ENCODE measurements at regions of chr19 and their contacts with region 1.

Region 1: DNA sequence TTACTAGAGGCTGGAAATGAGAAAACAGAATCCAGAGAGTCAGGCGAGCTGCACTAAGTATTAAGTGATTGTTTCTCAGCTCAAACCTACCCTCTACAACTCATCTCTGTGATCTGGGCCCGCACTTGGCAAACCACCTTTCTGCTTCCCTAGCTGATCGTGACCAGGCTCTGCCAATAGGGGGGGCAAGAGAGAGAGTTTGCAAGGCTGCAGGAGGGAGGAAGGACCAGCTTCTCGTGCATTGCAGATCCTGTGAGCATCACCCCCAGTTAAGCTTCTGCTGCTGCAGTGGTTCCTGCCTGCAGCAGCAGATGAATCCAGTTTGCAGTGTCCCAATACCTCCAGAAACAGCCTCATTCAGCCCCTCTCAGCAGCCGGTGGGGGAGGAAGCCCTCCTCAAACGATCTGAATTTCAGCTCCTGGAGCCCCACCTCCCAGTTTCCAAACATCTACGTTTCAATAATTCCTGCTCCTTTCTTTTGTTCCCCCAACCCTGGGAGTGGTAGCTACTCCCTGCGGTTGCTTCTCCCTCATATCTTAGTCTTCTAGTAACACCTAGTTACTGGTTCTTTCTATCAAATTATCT is 20.0 kb downstream of the XRCC1 start:
- H3K4me3 ChIP-seq: no peak overlapping the region
- H3K27ac ChIP-seq: no peak overlapping the region
- H3K4me1 ChIP-seq: no peaks in the 10 kb centered on the region
- CTCF ChIP-seq: peak; percentile 84

Region 2: GRCh38 chr19:43526884-43527859 is 28.1 kb before region 1 on chr19 and contains the start of gene ETHE1:
- CTCF ChIA-PET with region 1: interaction called, 138 read pairs
- POLR2A ChIA-PET with region 1: no interaction called
- H3K4me3 ChIP-seq: peak within 1 kb of the TSS; percentile 60
- H3K27ac ChIP-seq: peak within 1 kb of the TSS; percentile 64; the same call in 1 of the 2 replicates
- H3K4me1 ChIP-seq: peaks cover 30% of the 10 kb centered on the region
- CTCF ChIP-seq: peak; percentile 79

Region 3: GRCh38 chr19:43570174-43570791 is 15.0 kb after region 1 on chr19:
- CTCF ChIA-PET with region 1: interaction called, 167 read pairs
- POLR2A ChIA-PET with region 1: interaction called, 10 read pairs
- H3K4me3 ChIP-seq: no peak overlapping the region
- H3K27ac ChIP-seq: no peak overlapping the region
- H3K4me1 ChIP-seq: peaks cover 37% of the 10 kb centered on the region
- CTCF ChIP-seq: no peak

Region 4: GRCh38 chr19:43584484-43584883 is 29.2 kb after region 1 on chr19:
- CTCF ChIA-PET with region 1: interaction called, 12 read pairs
- POLR2A ChIA-PET with region 1: interaction called, 5 read pairs
- H3K4me3 ChIP-seq: no peak overlapping the region
- H3K27ac ChIP-seq: no peak overlapping the region; the same call in 1 of the 2 replicates
- H3K4me1 ChIP-seq: no peaks in the 10 kb centered on the region
- CTCF ChIP-seq: no peak

Region 5: GRCh38 chr19:43651758-43652545 is 96.7 kb after region 1 on chr19:
- CTCF ChIA-PET with region 1: interaction called, 36 read pairs
- POLR2A ChIA-PET with region 1: no interaction called
- H3K4me3 ChIP-seq: no peak overlapping the region
- H3K27ac ChIP-seq: 0 out of 2 replicates have a peak overlapping the region, but pooled peaks have one; percentile 1
- H3K4me1 ChIP-seq: peaks cover 3% of the 10 kb centered on the region
- CTCF ChIP-seq: peak; percentile 94